ENCODE measurements at regions of chr14 and their contacts with region 1.

Region 1: DNA sequence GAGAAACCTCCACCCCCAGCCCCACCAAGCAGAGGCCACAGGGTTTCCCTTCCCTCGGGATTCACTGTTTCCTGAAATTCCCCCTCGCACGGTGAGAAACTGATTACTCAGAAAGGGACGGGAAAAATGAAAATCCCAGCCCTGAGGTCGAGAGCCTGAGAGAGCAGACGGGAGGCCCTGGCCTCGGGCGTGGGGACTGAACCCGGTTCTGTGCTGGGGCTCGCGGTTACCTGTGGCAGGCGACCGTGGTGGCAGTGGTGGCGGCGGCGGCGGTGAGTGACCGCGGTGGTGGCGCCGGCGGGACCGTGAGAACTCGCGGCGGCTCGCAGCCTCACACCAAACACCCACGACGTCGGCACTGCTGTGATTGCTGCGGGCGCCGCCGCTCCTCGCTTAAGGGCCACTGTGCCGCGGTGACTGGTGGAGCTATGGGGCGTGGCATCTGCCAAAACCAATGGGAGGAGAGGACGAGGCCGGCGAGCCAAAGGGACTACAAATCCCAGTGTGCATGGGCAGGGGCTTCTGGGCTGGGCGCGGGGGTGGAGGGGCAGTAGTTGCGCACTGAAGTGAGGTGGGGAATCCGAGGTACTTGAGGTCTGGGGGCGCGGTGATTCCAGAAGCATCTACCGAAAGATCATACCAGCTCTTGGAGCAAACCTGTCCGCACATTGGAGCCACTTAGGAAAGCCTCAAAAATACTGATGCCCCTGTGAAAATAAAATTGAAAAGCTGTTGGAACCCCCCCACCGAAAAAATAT is at the start of gene LGMN:
- DNase-seq: peak; percentile 67 to 92 (median 86)
- ATAC-seq: peak; percentile 98
- H3K4me3 ChIP-seq: peak within 1 kb of the TSS; percentile 67
- H3K4me3 Mint-ChIP-seq: peak within 1 kb of the TSS; percentile 82 to 93 (median 89)
- H3K27ac ChIP-seq: peak within 1 kb of the TSS; percentile 73
- H3K27ac Mint-ChIP-seq: peak within 1 kb of the TSS in 8 of 9 donors; percentile 45 to 91 (median 78)
- H3K4me1 ChIP-seq: peaks cover 10 to 13% of the 10 kb centered on the region in 2 donors
- H3K4me1 Mint-ChIP-seq: peaks cover 28 to 53% (median 47%) of the 10 kb centered on the region in 7 donors
- H3K27me3 ChIP-seq: no peaks in the 10 kb centered on the region
- H3K27me3 Mint-ChIP-seq: peaks cover 0 to 77% (median 15%) of the 10 kb centered on the region in 5 donors
- total RNA-seq, gene LGMN: 8.7 to 28.7 (median 10.1) TPM

Region 2: GRCh38 chr14:92121670-92122350 is 626.6 kb before region 1 on chr14 and contains the starts of genes CPSF2 and NDUFB1:
- CTCF ChIA-PET with region 1: no interaction called
- POLR2A ChIA-PET with region 1: no interaction called
- intact Hi-C with region 1: loop called in 1 of 2 experiments (anchors 5 kb)
- DNase-seq: peak; percentile 74 to 87 (median 85)
- ATAC-seq: peak; percentile 92
- H3K4me3 ChIP-seq: peak within 1 kb of the TSS; percentile 78
- H3K4me3 Mint-ChIP-seq: peak within 1 kb of the TSS; percentile 88 to 100 (median 99)
- H3K27ac ChIP-seq: peak within 1 kb of the TSS; percentile 92
- H3K27ac Mint-ChIP-seq: peak within 1 kb of the TSS; percentile 96 to 100 (median 100)
- H3K4me1 ChIP-seq: peaks cover 17 to 19% of the 10 kb centered on the region in 2 donors
- H3K4me1 Mint-ChIP-seq: peaks cover 27 to 72% (median 53%) of the 10 kb centered on the region in 7 donors
- H3K27me3 ChIP-seq: no peaks in the 10 kb centered on the region
- H3K27me3 Mint-ChIP-seq: no peaks in the 10 kb centered on the region
- total RNA-seq, gene CPSF2: 30.2 to 77.4 (median 60.4) TPM
- total RNA-seq, gene NDUFB1: 55.1 to 107 (median 89.7) TPM

Region 3: DNA sequence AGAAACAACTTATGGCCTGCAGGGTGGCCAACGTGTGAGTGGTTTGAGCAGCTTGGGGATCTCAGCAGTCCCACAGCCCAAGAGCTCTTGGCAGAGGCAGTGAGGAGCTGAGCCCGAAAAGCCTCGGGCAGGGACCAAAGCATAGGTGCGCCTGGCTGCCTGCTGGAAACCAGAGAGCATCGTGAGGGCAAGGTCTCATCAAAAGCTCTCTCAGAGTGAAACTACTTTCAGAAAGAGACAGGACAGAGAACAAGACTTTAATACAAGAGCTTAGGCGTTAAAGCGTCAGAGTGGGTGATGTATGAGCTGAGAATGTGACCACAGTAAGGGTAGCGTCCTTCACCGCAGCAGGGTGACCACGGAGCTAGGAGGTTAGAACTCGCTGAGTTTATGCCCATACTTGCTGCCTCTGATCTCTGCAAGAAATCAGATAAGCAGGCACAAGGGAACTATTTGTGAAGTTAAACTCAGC is 30.8 kb before region 1 on chr14:
- CTCF ChIA-PET with region 1: interaction called, 7 read pairs
- POLR2A ChIA-PET with region 1: no interaction called
- intact Hi-C with region 1: loop called in 1 of 2 experiments (anchors 1 kb)
- DNase-seq: no peak
- ATAC-seq: peak; percentile 63
- H3K4me3 ChIP-seq: no peak overlapping the region
- H3K4me3 Mint-ChIP-seq: peak overlapping the region in 1 of 10 donors; percentile 30
- H3K27ac ChIP-seq: no peak overlapping the region
- H3K27ac Mint-ChIP-seq: peak overlapping the region in 2 of 9 donors; percentile 13 to 48
- H3K4me1 ChIP-seq: no peaks in the 10 kb centered on the region
- H3K4me1 Mint-ChIP-seq: peaks cover 0 to 8% (median 0%) of the 10 kb centered on the region in 7 donors
- H3K27me3 ChIP-seq: no peaks in the 10 kb centered on the region
- H3K27me3 Mint-ChIP-seq: peaks cover 0 to 2% (median 0%) of the 10 kb centered on the region in 5 donors

Region 4: GRCh38 chr14:92768795-92769194 is 20.4 kb after region 1 on chr14:
- CTCF ChIA-PET with region 1: no interaction called
- POLR2A ChIA-PET with region 1: no interaction called
- intact Hi-C with region 1: loop called in 1 of 2 experiments (anchors 2 kb)
- DNase-seq: no peak
- ATAC-seq: no peak
- H3K4me3 ChIP-seq: no peak overlapping the region
- H3K4me3 Mint-ChIP-seq: peak overlapping the region in 1 of 10 donors; percentile 32
- H3K27ac ChIP-seq: no peak overlapping the region
- H3K27ac Mint-ChIP-seq: peak overlapping the region in 1 of 9 donors; percentile 69
- H3K4me1 ChIP-seq: no peaks in the 10 kb centered on the region
- H3K4me1 Mint-ChIP-seq: peaks cover 0 to 25% (median 0%) of the 10 kb centered on the region in 7 donors
- H3K27me3 ChIP-seq: no peaks in the 10 kb centered on the region
- H3K27me3 Mint-ChIP-seq: peaks cover 0 to 44% (median 0%) of the 10 kb centered on the region in 5 donors

Region 5: DNA sequence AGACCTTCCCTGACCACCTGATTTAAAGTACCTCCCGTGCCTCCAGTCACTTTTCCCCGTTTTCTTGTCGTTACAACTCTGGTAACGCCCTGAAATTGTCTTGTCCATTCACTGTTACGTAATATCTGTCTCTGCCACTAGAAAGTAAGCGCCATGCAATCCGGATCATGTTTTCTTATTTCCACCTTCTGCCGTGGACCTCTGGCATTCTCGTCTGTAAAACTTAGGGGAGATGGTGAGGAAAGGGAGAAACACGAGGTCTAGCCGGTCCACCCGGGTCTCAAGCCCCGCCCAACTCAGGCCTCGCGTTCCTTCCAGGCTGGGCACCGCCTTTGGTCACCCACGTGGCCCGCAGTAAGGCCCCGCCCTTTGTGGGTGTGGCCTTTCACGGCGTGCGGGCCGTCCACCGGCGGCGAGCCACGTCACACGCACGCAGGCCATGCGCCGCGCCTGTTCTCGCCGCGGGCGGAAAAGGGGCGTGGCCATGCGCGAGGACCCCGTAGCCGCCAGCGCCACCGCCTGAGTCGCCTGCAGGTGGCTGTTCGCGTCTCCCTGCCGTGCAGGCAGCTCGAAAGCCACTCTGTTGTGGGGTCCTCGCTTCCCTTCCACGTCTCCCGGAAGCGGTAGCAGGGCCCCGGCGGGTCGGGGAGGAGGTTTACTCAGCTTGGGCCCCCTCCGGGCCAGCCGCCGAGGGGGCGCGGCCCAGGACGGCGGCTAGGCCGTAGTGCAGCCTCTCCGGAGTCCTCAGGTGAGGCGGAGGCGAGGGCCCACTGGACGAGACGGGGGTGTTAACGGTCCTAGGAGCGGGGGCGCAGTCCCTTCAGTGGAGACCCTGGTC is 45.5 kb after region 1 on chr14 and contains the start of gene GOLGA5:
- CTCF ChIA-PET with region 1: interaction called, 3 read pairs
- POLR2A ChIA-PET with region 1: interaction called, 5 read pairs
- intact Hi-C with region 1: loop called in 1 of 2 experiments (anchors 1 kb)
- DNase-seq: peak; percentile 97 to 100 (median 99)
- ATAC-seq: peak; percentile 97
- H3K4me3 ChIP-seq: peak within 1 kb of the TSS; percentile 98
- H3K4me3 Mint-ChIP-seq: peak within 1 kb of the TSS; percentile 78 to 96 (median 92)
- H3K27ac ChIP-seq: peak within 1 kb of the TSS; percentile 91
- H3K27ac Mint-ChIP-seq: peak within 1 kb of the TSS; percentile 78 to 98 (median 95)
- H3K4me1 ChIP-seq: peaks cover 15 to 20% of the 10 kb centered on the region in 2 donors
- H3K4me1 Mint-ChIP-seq: peaks cover 24 to 45% (median 39%) of the 10 kb centered on the region in 7 donors
- H3K27me3 ChIP-seq: no peaks in the 10 kb centered on the region
- H3K27me3 Mint-ChIP-seq: peaks cover 0 to 9% (median 0%) of the 10 kb centered on the region in 5 donors
- total RNA-seq, gene GOLGA5: 9.7 to 25.8 (median 23.5) TPM